ENCODE measurements at regions of chr5 and their contacts with region 1.

Region 1: DNA sequence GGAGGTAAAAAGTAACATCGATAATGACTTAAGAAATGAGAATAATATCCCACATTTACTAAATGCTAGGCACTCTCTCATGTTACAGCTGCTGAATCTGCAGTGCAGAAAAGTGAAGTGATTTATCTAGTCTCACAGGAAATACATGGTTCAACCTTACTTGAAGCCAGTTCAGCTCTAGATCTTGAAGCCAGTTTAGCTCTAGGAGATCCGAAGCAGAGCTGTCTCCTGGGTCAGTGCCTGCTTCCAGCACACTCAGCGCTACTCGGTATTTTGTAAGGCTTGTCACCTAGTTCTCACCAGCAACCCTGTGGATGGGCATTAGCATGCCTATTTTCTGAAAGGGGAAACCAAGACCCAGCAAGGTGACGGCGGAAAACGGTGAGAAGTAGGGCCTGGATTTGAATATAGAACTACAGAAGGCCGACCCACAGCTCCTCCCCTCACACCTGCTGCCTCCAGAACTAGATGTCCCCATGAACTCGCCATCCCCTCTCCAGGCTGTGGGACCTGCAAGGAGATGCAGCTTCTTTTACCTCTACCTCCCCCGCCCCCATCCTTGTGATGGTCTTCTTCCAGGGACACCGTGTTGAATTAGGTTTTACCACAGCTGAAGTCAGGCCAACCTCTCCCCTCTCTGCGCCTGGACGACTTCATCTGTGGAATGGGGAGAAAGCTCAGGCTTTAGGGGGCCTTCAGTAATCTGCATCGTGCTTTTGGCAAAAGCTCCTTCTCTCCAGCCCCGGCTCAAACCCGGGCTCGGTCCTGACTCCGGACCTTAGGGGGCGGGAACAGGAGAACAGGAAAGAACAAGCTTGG is 4.4 kb upstream of the MSX2 start:
- DNase-seq: no peak
- H3K4me3 ChIP-seq: no peak overlapping the region
- H3K27ac ChIP-seq: no peak overlapping the region
- H3K4me1 ChIP-seq: no peaks in the 10 kb centered on the region
- H3K27me3 ChIP-seq: peaks cover 79% of the 10 kb centered on the region
- CTCF ChIP-seq: no peak

Region 2: DNA sequence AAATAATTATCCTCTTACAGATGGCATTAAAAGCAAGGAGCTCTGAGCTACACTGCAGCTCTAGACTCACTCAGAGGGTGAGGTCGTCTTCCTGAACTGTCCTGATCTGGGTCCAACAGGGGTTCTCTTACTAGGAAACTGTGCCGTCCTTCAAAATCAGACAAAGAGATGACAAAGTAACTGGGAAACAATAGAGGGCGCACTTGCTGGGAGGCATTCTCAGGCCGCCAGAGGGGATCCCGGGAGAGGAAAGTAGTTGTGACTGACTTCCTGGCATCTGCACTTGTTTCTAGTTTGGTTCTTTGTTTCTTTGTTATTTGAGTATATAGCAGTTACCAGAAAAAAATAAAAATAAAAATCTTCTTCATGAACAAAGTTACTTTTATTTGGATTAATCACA is 138.5 kb before region 1 on chr5:
- CTCF ChIA-PET with region 1: no interaction called
- POLR2A ChIA-PET with region 1: no interaction called
- intact Hi-C with region 1: no loop called
- DNase-seq: no peak
- H3K4me3 ChIP-seq: no peak overlapping the region
- H3K27ac ChIP-seq: no peak overlapping the region
- H3K4me1 ChIP-seq: no peaks in the 10 kb centered on the region
- H3K27me3 ChIP-seq: peaks cover 62% of the 10 kb centered on the region
- CTCF ChIP-seq: peak; percentile 38; the same call in 1 of the 2 replicates

Region 3: GRCh38 chr5:174793684-174794328 is 73.8 kb after region 1 on chr5:
- CTCF ChIA-PET with region 1: interaction called, 14 read pairs
- POLR2A ChIA-PET with region 1: no interaction called
- intact Hi-C with region 1: no loop called
- DNase-seq: peak in 1 of 2 experiments; percentile 53
- H3K4me3 ChIP-seq: no peak overlapping the region
- H3K27ac ChIP-seq: no peak overlapping the region
- H3K4me1 ChIP-seq: no peaks in the 10 kb centered on the region
- H3K27me3 ChIP-seq: peaks cover 53% of the 10 kb centered on the region
- CTCF ChIP-seq: peak; percentile 90